Dorsolateral prefrontal cortex (tissue), 120 donors: ENCODE measurements at regions of chr12 and their contacts with region 1.

Region 1: GRCh38 chr12:751192-751998 is 984 bp upstream of the WNK1 start:
- DNase-seq: peak; percentile 86 to 94 (median 93)
- H3K4me3 ChIP-seq: peak overlapping the region; percentile 47 to 95 (median 87)
- H3K27ac ChIP-seq: peak overlapping the region; percentile 78 to 100 (median 99)
- H3K27me3 ChIP-seq: no peaks in the 10 kb centered on the region
- CTCF ChIP-seq: peak in 55 of 56 donors; percentile 47 to 91 (median 81)

Region 2: GRCh38 chr12:538731-539539 is 212.5 kb before region 1 on chr12:
- intact Hi-C with region 1: no loop called
- DNase-seq: peak in 1 of 10 donors; percentile 35
- H3K4me3 ChIP-seq: no peak overlapping the region
- H3K27ac ChIP-seq: no peak overlapping the region
- H3K27me3 ChIP-seq: no peaks in the 10 kb centered on the region
- CTCF ChIP-seq: no peak

Region 3: DNA sequence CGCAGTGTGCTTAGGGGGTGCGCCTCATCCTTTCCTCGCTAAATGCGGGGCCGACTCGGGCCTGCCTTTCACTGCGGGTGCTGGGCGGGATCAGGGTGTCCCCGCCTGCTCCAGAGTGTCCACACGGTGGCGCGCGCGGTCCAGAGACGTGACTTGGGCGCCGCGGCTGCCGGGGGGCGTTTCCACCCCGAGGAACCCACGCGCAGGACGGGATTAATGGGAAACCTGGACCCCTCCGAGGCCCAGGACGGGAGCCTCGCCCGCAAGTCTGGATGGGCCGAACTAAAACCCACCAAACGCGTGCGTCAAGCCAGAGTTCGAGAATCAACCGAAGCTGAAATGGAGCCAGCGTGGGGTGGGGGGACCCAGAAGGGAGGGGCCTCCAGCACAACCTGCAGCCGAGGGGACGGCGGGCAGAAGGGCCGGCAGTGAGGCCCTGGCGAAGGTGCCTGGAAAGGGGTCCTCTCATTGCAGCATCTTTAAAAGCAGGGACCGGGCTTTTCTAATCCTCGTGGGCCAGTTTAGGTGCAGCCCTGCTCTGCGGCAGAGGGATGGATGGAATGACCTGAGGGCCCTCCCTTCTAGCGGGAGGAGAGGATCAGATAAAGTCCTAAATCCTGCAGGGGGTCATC is 181.5 kb before region 1 on chr12:
- intact Hi-C with region 1: loop called (anchors 2 kb)
- DNase-seq: peak; percentile 76 to 89 (median 84)
- H3K4me3 ChIP-seq: peak overlapping the region; percentile 48 to 92 (median 68)
- H3K27ac ChIP-seq: peak overlapping the region in 55 of 59 donors; percentile 22 to 87 (median 72)
- H3K27me3 ChIP-seq: no peaks in the 10 kb centered on the region
- CTCF ChIP-seq: peak; percentile 75 to 98 (median 95)

Region 4: DNA sequence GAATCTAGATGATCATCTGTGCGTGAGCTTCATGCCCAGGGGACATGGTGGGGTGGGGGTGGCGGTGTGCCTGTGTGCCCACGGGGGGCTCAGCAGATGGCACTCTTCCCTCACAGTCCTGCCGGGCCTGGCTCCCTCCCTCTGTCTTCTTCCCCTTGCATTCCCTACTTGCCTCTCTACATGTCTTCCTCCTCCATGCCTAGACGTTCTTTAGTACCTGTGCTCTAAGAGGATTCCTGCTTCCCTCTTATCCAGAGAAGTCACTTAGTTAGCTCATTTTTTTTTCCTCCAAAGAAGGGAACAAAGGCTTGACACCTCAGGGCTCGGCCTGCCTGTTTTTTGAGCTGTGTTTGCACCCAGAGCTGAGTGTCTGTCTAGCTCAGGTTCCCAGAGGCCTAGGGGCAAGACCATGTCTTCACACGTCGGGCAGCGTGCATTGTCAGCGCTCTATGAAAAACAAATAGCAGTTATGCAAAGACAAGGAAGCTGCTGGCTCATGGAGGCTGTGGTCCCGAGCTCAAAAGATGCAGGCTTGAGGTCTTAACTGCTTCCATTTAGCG is 136.9 kb before region 1 on chr12:
- intact Hi-C with region 1: loop called in 1 of 2 experiments (anchors 10 kb)
- DNase-seq: peak in 7 of 10 donors; percentile 32 to 67 (median 56)
- H3K4me3 ChIP-seq: no peak overlapping the region
- H3K27ac ChIP-seq: peak overlapping the region in 39 of 59 donors; percentile 4 to 79 (median 52)
- H3K27me3 ChIP-seq: no peaks in the 10 kb centered on the region
- CTCF ChIP-seq: peak in 53 of 56 donors; percentile 22 to 77 (median 48)

Region 5: GRCh38 chr12:662566-663292 is 88.7 kb before region 1 on chr12:
- intact Hi-C with region 1: loop called (anchors 2 to 5 kb)
- DNase-seq: no peak
- H3K4me3 ChIP-seq: peak overlapping the region; percentile 31 to 76 (median 56)
- H3K27ac ChIP-seq: peak overlapping the region; percentile 71 to 97 (median 88)
- H3K27me3 ChIP-seq: no peaks in the 10 kb centered on the region
- CTCF ChIP-seq: no peak

Region 6: DNA sequence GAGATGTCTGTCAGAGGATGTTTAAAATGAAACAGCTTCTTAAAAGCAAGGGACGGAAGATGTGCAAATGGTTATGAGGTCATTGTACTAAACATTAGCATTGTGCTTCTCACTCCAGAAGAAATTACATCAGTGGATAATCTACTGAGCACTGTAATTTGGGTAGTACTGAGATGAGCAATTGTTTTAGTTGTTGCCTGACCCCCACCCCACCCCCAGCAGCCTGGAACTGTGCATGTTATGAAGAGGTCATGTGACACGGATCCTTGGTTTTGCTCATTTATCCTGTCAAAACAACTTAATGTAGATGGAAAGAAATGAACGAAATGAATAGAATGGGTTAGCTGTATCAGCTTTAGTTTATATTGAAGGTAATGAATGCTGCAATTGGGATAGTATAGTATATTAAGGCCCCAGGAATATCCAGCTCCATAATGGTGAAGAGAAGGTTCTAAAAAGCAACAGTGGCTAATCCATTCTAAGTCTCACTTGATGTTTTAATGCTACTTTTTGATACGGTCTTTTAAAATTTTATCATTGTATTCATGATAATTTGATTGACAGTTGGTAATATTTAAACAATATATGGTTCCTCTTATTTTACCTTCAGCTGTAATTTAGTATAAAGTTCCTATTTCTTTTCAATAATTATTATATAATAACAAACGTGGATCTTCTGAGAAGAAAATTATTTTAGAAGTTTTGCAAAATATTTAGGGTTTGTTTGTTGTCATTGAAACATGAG is 59.4 kb after region 1 on chr12:
- intact Hi-C with region 1: loop called (anchors 2 to 5 kb)
- DNase-seq: peak in 1 of 10 donors; percentile 21
- H3K4me3 ChIP-seq: peak overlapping the region in 7 of 59 donors; percentile 4 to 35 (median 16)
- H3K27ac ChIP-seq: peak overlapping the region in 41 of 59 donors; percentile 0 to 74 (median 40)
- H3K27me3 ChIP-seq: no peaks in the 10 kb centered on the region
- CTCF ChIP-seq: no peak

Region 7: GRCh38 chr12:990661-991349 is 239.4 kb after region 1 on chr12 and contains the start of gene ERC1:
- intact Hi-C with region 1: loop called (anchors 2 to 5 kb)
- DNase-seq: peak; percentile 76 to 94 (median 84)
- H3K4me3 ChIP-seq: peak within 1 kb of the TSS; percentile 60 to 97 (median 89)
- H3K27ac ChIP-seq: peak within 1 kb of the TSS; percentile 75 to 99 (median 96)
- H3K27me3 ChIP-seq: no peaks in the 10 kb centered on the region
- CTCF ChIP-seq: peak in 29 of 56 donors; percentile 5 to 57 (median 22)
- total RNA-seq, gene ERC1: 50.9 to 130 (median 83.8) TPM